A549 (cell line): ENCODE measurements at regions of chr1 and their contacts with region 1.

Region 1: DNA sequence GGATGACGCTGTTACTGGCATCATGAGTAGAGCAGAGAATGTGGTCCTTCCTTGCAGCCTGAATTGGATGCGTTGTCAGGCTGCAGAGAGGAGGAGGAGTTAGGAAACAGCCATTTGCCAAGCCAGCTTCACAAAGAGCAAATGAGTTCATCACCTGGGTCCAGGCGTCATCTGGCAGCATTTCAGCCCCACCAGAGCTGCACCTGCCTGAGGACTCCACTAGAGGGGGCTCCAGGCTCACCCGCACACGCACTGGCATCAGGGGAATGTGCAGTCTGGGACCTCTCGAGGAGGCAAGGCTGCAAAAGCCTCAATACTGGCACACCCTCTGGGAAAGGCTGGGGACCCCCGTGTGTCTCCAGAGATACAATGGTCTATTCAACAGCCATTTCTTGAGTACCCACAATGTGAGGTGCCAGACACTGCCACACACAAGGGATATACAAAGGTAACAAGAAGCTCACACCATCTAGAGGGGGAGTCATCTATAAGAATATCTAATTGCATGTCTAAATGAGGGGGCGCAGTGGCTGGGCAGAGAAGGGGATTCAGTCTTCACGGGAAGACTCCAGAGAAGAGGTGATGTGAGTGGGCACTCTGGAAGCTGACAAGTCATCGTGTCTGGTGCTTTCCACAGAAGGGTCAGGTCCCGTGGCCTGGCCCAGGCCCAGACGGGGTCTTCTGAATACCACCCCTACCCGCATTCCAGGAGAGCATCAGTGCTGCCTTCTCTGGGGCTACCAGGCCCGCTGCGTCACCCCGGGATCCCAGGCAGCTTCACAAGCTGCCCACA is 53.5 kb upstream of the CNTN2 start:
- DNase-seq: peak; percentile 63 to 96
- ATAC-seq: peak; percentile 76 to 90
- H3K4me3 ChIP-seq: no peak overlapping the region
- H3K27ac ChIP-seq: no peak overlapping the region
- H3K4me1 ChIP-seq: no peaks in the 10 kb centered on the region
- CTCF ChIP-seq: peak; percentile 93
- EP300 ChIP-seq: no peak
- POLR2A ChIP-seq: no peak
- RAD21 ChIP-seq: peak; percentile 92 to 97

Region 2: DNA sequence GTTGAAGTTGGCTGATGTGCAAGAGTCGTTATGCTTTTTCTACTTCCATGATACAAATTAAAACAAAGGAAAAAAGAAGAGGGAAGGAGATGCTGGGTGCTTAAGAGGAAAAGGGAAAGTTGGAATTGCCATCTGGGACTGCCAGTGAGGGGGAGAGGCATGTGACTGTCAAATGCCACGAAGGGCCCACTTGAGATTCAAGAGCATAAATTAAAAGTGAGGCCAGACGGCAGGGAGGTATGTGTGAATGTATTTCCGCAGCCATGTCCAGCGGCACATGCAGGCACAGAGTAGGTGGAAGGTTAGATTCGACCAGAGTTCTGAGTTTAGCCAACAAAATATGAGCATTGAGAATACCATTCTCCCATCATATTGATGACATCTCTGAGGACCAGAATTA is 86.8 kb before region 1 on chr1:
- CTCF ChIA-PET with region 1: no interaction called
- POLR2A ChIA-PET with region 1: no interaction called
- DNase-seq: no peak
- ATAC-seq: no peak
- H3K4me3 ChIP-seq: no peak overlapping the region
- H3K27ac ChIP-seq: no peak overlapping the region
- H3K4me1 ChIP-seq: no peaks in the 10 kb centered on the region
- CTCF ChIP-seq: no peak
- EP300 ChIP-seq: no peak
- POLR2A ChIP-seq: no peak
- RAD21 ChIP-seq: no peak

Region 3: DNA sequence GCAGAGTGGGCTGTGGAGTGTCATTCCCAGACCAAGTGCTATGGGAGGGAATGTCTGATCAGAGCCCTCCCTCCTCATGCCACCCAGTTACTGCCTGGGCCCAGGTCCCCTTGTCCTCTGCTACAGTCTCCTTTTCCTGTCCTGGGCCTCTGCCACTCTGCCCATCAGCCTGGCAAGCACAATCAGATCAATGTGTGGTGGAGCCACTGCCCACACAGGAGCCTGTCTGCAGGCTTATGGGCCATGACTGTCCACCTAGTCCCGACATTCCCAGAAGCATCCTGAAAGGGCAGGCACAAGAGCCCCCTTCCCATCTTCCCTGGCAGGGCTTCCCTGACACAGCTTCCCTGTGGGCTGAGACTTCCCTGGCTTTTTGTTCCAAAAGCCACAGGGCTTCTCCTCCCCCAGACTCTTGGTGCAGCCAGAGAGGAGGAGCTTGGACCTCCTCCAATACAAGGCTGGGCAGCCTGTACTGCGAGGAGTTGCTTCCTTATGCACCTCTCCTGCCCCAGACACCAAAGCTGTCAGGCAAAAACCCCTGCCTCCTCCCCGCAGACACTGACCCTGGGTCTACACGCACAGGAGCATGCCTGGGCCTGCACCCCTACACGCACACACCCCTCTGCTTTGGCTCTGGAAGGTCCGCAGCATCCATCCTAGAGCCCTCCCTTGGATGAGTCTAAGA is 24.4 kb after region 1 on chr1:
- CTCF ChIA-PET with region 1: interaction called, 11 read pairs
- POLR2A ChIA-PET with region 1: no interaction called
- DNase-seq: no peak
- ATAC-seq: no peak
- H3K4me3 ChIP-seq: no peak overlapping the region
- H3K27ac ChIP-seq: no peak overlapping the region
- H3K4me1 ChIP-seq: no peaks in the 10 kb centered on the region
- CTCF ChIP-seq: no peak
- EP300 ChIP-seq: no peak
- POLR2A ChIP-seq: no peak
- RAD21 ChIP-seq: no peak

Region 4: DNA sequence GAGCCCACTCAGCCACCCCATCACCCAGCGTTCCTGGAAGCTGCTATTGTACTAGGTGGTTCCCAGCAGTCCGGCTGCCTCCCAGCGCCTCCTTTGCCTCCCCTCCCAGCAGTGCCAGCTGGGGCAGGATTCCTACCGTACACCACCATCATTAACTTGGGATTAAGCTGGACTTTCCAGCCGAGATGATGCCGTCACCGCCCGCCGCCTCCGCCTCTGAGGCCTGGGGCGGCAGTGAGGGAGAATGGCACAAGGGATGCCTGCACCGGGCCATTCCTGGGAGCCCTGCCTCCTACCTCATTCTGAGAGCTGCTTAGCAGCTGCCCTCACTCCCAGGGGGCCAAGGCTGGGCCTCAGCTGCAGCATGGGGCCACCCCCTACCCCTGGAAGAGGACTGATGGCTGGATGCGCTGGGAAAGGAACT is 66.7 kb after region 1 on chr1:
- CTCF ChIA-PET with region 1: interaction called, 152 read pairs
- POLR2A ChIA-PET with region 1: no interaction called
- DNase-seq: no peak
- ATAC-seq: no peak
- H3K4me3 ChIP-seq: no peak overlapping the region
- H3K27ac ChIP-seq: no peak overlapping the region
- H3K4me1 ChIP-seq: no peaks in the 10 kb centered on the region
- CTCF ChIP-seq: no peak
- EP300 ChIP-seq: no peak
- POLR2A ChIP-seq: no peak
- RAD21 ChIP-seq: no peak

Region 5: GRCh38 chr1:205088341-205088740 is 98.9 kb after region 1 on chr1:
- CTCF ChIA-PET with region 1: interaction called, 15 read pairs
- POLR2A ChIA-PET with region 1: no interaction called
- DNase-seq: no peak
- ATAC-seq: no peak
- H3K4me3 ChIP-seq: no peak overlapping the region
- H3K27ac ChIP-seq: no peak overlapping the region
- H3K4me1 ChIP-seq: no peaks in the 10 kb centered on the region
- CTCF ChIP-seq: no peak
- EP300 ChIP-seq: no peak
- POLR2A ChIP-seq: no peak
- RAD21 ChIP-seq: no peak

Region 6: DNA sequence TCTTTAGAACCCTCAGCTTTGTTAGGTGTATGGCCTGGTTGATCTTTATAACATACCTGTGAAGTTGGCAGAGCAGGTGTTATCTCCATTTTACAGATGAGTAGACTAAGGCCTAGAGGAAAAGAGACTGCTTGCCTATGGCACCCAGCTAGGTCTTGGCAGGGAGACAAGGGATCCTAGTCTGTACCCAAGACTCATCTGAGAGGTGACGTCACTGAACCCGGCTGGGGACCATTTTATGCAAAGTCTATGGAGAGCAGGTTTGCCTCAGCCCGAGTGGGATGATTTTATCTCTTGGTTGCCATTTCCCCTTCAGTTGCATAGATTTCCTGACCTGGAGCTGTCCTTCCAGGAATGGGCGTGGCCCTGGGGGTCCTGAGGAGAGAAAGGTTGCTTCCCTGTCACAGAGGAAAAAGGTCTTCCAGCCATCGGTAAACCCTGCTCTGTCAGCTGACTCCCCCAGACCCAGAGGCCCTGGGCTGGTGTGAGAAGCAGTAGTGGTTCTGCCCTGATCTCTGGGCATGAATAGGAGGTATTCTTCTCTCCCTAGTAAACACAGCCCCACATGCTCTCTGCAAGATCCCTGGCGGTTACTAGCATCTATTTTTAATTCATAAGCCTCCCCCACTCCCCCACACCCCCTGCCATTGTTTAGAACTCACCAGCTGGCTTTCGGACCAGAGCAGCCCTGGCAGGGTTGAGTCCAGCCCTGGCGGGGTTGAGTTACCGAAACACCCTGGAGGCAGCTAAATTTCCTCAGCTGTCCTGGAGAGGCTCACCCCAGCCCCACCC is 257.9 kb after region 1 on chr1:
- CTCF ChIA-PET with region 1: interaction called, 220 read pairs
- POLR2A ChIA-PET with region 1: no interaction called
- DNase-seq: no peak
- ATAC-seq: no peak
- H3K4me3 ChIP-seq: no peak overlapping the region
- H3K27ac ChIP-seq: no peak overlapping the region
- H3K4me1 ChIP-seq: peaks cover 12% of the 10 kb centered on the region
- CTCF ChIP-seq: no peak
- EP300 ChIP-seq: no peak
- POLR2A ChIP-seq: no peak
- RAD21 ChIP-seq: no peak